Heart left ventricle (tissue), 16 donors: ENCODE measurements at regions of chr3 and their contacts with region 1.

Region 1: GRCh38 chr3:179071550-179072397 is at the start of gene ZMAT3:
- DNase-seq: peak; percentile 92 to 95 (median 93)
- ATAC-seq: peak; percentile 78 to 99 (median 98)
- H3K4me3 ChIP-seq: peak within 1 kb of the TSS; percentile 49 to 96 (median 84)
- H3K27ac ChIP-seq: peak within 1 kb of the TSS; percentile 59 to 95 (median 90)
- H3K4me1 ChIP-seq: peaks cover 0 to 42% (median 21%) of the 10 kb centered on the region in 12 donors
- H3K27me3 ChIP-seq: no peaks in the 10 kb centered on the region
- CTCF ChIP-seq: peak in 2 of 12 donors; percentile 8 to 14
- POLR2A ChIP-seq: peak in 1 of 2 donors; percentile 79
- total RNA-seq, gene ZMAT3: 10.5 to 23.2 (median 15.6) TPM

Region 2: GRCh38 chr3:178500631-178501030 is 571.1 kb before region 1 on chr3:
- intact Hi-C with region 1: no loop called
- DNase-seq: no peak
- ATAC-seq: no peak
- H3K4me3 ChIP-seq: no peak overlapping the region
- H3K27ac ChIP-seq: no peak overlapping the region
- H3K4me1 ChIP-seq: no peaks in the 10 kb centered on the region
- H3K27me3 ChIP-seq: no peaks in the 10 kb centered on the region
- CTCF ChIP-seq: no peak
- POLR2A ChIP-seq: no peak

Region 3: GRCh38 chr3:178907081-178907480 is 164.7 kb before region 1 on chr3:
- intact Hi-C with region 1: no loop called
- DNase-seq: no peak
- ATAC-seq: no peak
- H3K4me3 ChIP-seq: no peak overlapping the region
- H3K27ac ChIP-seq: no peak overlapping the region
- H3K4me1 ChIP-seq: no peaks in the 10 kb centered on the region
- H3K27me3 ChIP-seq: no peaks in the 10 kb centered on the region
- CTCF ChIP-seq: no peak
- POLR2A ChIP-seq: no peak

Region 4: GRCh38 chr3:179027326-179027900 is 44.4 kb before region 1 on chr3:
- intact Hi-C with region 1: loop called in 1 of 10 experiments (anchors 10 kb)
- DNase-seq: no peak
- ATAC-seq: peak in 1 of 4 donors; percentile 55
- H3K4me3 ChIP-seq: no peak overlapping the region
- H3K27ac ChIP-seq: no peak overlapping the region
- H3K4me1 ChIP-seq: peaks cover 0 to 15% (median 0%) of the 10 kb centered on the region in 12 donors
- H3K27me3 ChIP-seq: no peaks in the 10 kb centered on the region
- CTCF ChIP-seq: no peak
- POLR2A ChIP-seq: no peak